ENCODE measurements at regions of chr16 and their contacts with region 1.

Region 1: GRCh38 chr16:60337671-60338070 is 1603.6 kb upstream of the GOT2 start:
- DNase-seq: no peak
- H3K4me3 ChIP-seq: no peak overlapping the region
- H3K27ac ChIP-seq: no peak overlapping the region
- H3K4me1 ChIP-seq: no peaks in the 10 kb centered on the region
- H3K27me3 ChIP-seq: no peaks in the 10 kb centered on the region
- CTCF ChIP-seq: no peak
- POLR2A ChIP-seq: no peak

Region 2: DNA sequence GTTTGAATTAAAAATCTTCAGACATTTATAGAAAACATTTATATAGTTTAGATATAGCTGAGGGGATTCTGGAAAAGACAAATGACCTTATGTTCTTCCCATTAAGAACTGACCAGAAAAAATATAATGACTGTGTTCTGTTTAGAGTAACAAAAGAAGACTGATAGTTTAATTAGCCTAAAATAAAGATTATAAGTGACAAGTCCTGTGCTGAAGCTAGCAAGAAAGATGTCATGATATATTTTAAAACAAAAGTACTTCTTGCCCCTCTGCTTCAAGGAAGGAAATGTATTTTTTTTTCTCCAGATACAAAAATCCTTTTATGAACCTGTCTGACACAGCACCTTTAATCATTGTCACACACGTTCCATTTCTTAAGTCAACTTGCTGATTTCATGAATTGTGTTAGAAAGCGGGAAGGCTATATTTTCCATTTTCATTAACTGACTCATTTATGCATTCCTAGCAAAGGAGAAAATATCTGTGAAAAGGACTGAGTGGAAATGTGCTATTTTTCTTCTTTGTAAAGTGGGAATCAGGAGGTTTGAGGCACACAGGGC is 912.9 kb before region 1 on chr16:
- intact Hi-C with region 1: loop called (anchors 5 kb)
- DNase-seq: no peak
- H3K4me3 ChIP-seq: no peak overlapping the region
- H3K27ac ChIP-seq: no peak overlapping the region
- H3K4me1 ChIP-seq: no peaks in the 10 kb centered on the region
- H3K27me3 ChIP-seq: no peaks in the 10 kb centered on the region
- CTCF ChIP-seq: no peak
- POLR2A ChIP-seq: no peak

Region 3: DNA sequence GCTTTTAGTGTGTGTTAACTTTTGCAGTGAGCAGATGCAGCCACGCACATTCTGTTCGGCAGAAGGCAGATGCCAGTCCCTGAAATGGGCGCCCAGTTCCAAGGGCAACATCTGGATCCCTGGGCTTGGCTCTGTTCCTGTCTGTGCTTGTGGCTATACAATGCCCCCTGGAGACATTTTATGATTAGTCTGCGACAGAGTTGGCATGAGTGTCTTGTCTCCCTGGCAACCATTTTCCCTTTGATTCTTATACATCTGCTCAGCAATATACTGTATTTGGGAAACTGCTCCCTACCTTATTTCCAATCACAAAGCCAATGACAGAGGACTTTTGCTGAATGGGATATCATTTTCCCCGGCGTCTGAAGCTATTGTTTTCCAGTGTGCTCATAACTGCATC is 25.9 kb after region 1 on chr16:
- intact Hi-C with region 1: no loop called
- DNase-seq: no peak
- H3K4me3 ChIP-seq: no peak overlapping the region
- H3K27ac ChIP-seq: no peak overlapping the region
- H3K4me1 ChIP-seq: no peaks in the 10 kb centered on the region
- H3K27me3 ChIP-seq: no peaks in the 10 kb centered on the region
- CTCF ChIP-seq: no peak
- POLR2A ChIP-seq: no peak